HEK293 (cell line): ENCODE measurements at regions of chr11 and their contacts with region 1.

Region 1: GRCh38 chr11:73760679-73761402 is at the start of gene RAB6A:
- H3K4me3 ChIP-seq: peak within 1 kb of the TSS; percentile 97
- H3K27ac ChIP-seq: peak within 1 kb of the TSS; percentile 88
- H3K4me1 ChIP-seq: 0 out of 2 replicates have a peak, but pooled peaks cover 9% of the 10 kb centered on the region
- CTCF ChIP-seq: 0 out of 2 replicates have a peak, but pooled peaks have one; percentile 31

Region 2: DNA sequence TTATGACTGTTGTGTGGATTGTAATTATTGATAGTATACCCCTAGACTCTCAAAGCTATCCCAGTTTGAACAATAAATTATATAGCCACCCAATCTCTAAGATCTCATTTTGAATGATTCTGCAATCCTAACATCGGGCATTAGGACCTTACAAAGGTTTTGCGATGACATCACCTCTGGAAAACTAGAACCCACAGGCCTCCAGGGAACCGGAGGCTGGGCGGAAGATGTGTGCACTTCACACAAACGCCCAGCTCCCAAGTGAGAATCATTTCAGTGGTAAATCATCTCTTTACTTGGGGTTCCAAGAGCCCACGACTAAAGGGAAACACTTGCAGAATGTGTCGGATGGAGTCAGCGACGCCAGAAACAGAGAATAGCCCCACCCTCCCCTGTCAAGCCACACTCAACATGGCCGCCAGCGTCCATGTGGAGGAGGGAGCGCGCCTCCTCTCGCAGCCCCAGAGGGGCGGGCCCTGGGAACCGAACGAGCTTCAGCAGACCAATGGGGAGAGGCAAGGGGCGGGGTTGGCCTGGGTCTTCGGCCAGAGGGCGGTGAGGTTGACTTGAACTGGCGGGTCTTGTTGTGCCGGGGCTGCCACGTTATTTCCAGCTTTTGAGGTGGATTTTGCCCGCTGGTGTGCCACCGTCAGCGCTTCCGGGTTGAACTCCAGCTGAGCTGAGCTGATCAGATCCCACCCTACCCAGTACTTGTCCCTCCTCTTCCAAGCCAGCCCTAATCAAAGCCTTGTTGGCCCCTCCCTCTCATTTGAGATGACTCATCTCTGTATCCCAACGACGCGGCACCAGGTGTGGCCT is 18.5 kb after region 1 on chr11:
- CTCF ChIA-PET with region 1: interaction called, 15 read pairs
- POLR2A ChIA-PET with region 1: interaction called, 102 read pairs
- H3K4me3 ChIP-seq: peak overlapping the region; percentile 51
- H3K27ac ChIP-seq: peak overlapping the region; percentile 92
- H3K4me1 ChIP-seq: no peaks in the 10 kb centered on the region
- CTCF ChIP-seq: no peak

Region 3: DNA sequence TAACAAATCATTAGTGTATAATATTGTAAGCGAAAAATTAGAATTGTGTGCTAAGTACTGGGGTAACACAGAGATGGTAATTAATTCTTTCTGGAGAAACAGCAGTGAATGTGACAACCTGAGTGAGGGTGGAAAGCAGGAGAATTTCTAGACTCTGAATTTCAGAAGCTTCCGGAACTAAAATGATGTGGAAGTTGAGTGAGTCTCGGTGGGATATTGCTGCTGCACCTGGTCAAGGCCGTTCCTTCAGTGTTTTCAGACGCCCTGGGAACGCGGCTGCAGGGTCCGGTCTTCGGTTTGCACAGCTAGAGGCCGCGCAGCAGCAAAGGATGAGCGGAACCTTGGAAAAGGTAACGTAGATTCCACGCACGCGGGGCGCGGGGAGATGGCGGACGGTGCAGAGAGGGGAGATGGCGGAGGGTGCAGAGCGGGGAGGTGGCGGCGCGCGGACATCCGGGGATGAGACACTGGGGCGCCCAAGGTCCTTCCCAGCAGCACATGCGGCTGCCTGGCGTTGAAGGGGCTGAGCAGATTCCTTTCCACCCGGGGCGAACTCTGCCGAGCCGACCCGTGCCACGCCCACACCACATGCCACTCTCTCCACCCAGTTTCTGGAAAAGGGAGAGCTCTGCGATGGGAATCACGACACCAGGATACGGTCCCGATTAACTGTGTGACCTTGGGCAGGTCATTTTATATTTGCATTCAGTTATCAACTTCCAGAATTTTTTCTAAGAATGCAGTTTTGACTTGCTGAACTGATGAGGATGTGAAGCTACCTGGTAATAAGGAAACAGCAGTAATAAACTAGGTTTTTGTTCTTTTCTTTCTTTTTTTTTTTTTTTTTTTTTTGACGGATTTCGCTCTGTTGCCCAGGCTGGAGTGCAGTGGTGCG is 27.0 kb after region 1 on chr11 and contains the start of gene MRPL48:
- CTCF ChIA-PET with region 1: no interaction called
- POLR2A ChIA-PET with region 1: interaction called, 32 read pairs
- H3K4me3 ChIP-seq: peak within 1 kb of the TSS; percentile 99
- H3K27ac ChIP-seq: peak within 1 kb of the TSS; percentile 95
- H3K4me1 ChIP-seq: no peaks in the 10 kb centered on the region
- CTCF ChIP-seq: no peak

Region 4: GRCh38 chr11:73974277-73975234 is 213.7 kb after region 1 on chr11:
- CTCF ChIA-PET with region 1: no interaction called
- POLR2A ChIA-PET with region 1: no interaction called
- H3K4me3 ChIP-seq: no peak overlapping the region
- H3K27ac ChIP-seq: no peak overlapping the region
- H3K4me1 ChIP-seq: no peaks in the 10 kb centered on the region
- CTCF ChIP-seq: no peak